ENCODE measurements at regions of chr1 and their contacts with region 1.

Region 1: DNA sequence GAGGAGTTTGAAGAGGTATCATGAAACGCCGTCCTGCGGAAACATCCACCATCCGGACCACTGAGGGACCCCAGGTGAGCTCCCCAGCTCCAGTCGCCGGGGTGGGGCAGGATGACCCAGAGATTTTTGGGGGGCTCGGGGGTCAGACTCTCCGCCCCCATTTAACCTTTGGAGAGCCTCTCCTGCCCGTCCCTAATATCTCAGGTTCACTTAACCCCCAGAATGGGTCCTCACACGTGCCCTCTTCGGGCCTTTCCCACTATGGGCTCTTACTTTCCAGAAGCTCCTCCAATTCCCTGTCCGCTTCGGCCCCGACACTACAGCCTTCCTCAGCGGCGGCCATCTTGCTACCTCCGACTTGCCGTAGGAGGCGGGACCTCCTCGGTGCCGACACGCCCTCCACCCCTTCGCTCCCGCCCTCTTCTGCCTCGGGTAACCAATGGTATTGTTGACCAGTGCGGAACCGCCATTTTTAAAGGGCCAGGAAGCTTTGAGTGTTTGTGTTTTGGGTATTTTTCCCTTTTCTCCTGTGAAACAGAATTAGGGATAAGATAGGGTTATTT is at the start of gene PEX19:
- DNase-seq: peak; percentile 99

Region 2: GRCh38 chr1:160226623-160227022 is 58.2 kb before region 1 on chr1:
- CTCF ChIA-PET with region 1: no interaction called
- POLR2A ChIA-PET with region 1: no interaction called
- DNase-seq: no peak

Region 3: GRCh38 chr1:160261893-160262794 is 22.7 kb before region 1 on chr1 and contains the start of gene DCAF8:
- CTCF ChIA-PET with region 1: interaction called, 3 read pairs
- POLR2A ChIA-PET with region 1: interaction called, 15 read pairs
- DNase-seq: peak; percentile 98

Region 4: GRCh38 chr1:160315359-160315758 is 30.5 kb after region 1 on chr1:
- CTCF ChIA-PET with region 1: no interaction called
- POLR2A ChIA-PET with region 1: no interaction called
- DNase-seq: no peak

Measured in HEK293T (cell line).